Right ventricle myocardium inferior (tissue), 1 donor: ENCODE measurements at regions of chr3 and their contacts with region 1.

Region 1: DNA sequence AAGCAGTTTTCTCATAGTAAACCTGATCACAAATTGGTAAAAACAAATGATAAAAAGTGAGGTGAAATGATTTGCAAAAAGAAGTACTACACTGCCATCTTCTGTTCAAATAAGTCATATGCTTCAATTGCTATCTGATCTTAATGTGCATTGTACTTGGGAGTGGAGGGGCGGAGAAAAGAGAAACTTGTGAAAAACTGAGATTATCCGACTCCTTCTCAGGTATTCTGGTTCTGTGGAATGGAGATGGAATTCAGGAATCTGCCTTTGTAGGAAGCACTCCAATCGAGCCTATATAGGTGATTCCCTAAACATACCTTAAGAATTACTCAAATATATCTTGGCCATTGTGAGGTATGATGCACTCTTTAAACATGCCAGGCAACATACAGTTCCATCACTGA is 180.6 kb downstream of the CHL1 start:
- DNase-seq: no peak
- ATAC-seq: no peak

Region 2: DNA sequence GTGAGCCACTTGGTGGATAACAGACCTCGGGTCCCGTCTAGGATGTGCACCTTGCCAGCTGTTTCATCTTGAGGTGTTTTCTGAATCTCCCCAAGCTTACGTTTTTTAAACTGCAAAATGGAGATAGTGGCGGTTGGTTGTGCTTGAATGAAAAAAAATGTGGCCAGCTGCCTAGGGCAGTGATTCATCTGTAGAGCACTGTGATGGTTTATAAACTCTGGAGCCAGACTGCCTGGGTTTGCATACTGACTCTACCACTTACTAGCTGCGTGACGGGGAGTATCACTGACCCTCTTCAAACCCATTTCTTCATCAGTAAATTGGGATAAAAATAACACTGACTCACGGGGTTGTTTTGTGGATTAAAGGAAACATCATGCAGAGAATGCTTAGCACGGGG is 21.5 kb before region 1 on chr3:
- intact Hi-C with region 1: loop called (anchors 2 kb)
- DNase-seq: no peak
- ATAC-seq: no peak